Sigmoid colon (tissue), 7 donors: ENCODE measurements at regions of chr17 and their contacts with region 1.

Region 1: DNA sequence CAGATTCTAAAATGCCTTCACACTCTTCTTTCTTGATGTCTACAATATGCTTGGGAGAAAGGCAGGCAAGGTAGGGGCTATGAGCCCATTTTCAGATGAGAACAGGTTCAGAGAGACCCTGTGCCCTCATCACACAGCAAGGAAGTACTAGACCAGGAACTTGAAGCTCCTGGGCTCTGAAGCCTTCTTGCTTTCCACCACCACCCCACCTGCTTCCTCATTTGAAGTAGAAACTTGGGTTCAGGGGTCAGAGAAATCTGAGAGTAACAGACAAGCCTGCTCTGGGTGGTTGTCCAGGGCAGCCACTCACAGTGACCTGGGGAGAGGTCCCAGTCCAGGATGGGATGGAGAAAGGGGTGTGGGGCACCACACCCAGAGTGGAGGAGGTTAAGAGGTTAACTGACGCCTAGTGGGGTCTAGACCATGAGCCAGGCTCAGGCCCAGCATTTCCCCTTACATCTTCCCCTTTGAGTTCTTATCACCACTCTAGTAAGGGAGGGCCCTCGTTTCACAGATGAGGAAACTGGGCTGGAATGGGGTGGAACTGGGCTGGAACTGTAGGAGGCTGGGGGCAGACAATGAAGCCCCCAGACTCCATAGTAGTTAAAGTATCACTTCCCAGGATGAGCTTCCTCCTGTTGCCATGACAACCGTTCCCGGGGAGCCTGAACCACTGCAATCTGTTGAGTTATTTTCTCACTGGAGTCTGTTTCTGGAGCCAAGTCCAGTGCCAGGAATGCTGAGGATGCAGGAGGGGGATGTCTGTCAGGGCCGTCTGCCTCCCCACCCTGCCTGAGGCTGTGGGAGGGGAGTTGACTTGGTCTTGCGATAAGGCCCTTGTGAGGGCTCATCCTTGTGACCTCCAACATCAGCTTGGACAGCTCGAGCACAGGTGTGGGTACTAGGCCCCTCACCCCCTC is 16.2 kb upstream of the PHF12 start:
- DNase-seq: no peak
- H3K4me3 ChIP-seq: no peak overlapping the region
- H3K27ac ChIP-seq: no peak overlapping the region
- H3K4me1 ChIP-seq: no peaks in the 10 kb centered on the region
- H3K27me3 ChIP-seq: no peaks in the 10 kb centered on the region
- CTCF ChIP-seq: no peak
- EP300 ChIP-seq: no peak
- POLR2A ChIP-seq: no peak

Region 2: GRCh38 chr17:28937044-28937729 is 30.3 kb before region 1 on chr17:
- intact Hi-C with region 1: no loop called
- DNase-seq: no peak
- H3K4me3 ChIP-seq: no peak overlapping the region
- H3K27ac ChIP-seq: peak overlapping the region in 3 of 4 donors; percentile 13 to 38 (median 26)
- H3K4me1 ChIP-seq: peaks cover 0 to 89% (median 75%) of the 10 kb centered on the region in 4 donors
- H3K27me3 ChIP-seq: no peaks in the 10 kb centered on the region
- CTCF ChIP-seq: no peak
- EP300 ChIP-seq: no peak
- POLR2A ChIP-seq: no peak

Region 3: GRCh38 chr17:29111816-29112499 is 144.5 kb after region 1 on chr17:
- intact Hi-C with region 1: loop called (anchors 1 kb)
- DNase-seq: peak; percentile 80
- H3K4me3 ChIP-seq: no peak overlapping the region
- H3K27ac ChIP-seq: no peak overlapping the region
- H3K4me1 ChIP-seq: no peaks in the 10 kb centered on the region
- H3K27me3 ChIP-seq: no peaks in the 10 kb centered on the region
- CTCF ChIP-seq: peak; percentile 59 to 91 (median 74)
- EP300 ChIP-seq: no peak
- POLR2A ChIP-seq: no peak

Region 4: DNA sequence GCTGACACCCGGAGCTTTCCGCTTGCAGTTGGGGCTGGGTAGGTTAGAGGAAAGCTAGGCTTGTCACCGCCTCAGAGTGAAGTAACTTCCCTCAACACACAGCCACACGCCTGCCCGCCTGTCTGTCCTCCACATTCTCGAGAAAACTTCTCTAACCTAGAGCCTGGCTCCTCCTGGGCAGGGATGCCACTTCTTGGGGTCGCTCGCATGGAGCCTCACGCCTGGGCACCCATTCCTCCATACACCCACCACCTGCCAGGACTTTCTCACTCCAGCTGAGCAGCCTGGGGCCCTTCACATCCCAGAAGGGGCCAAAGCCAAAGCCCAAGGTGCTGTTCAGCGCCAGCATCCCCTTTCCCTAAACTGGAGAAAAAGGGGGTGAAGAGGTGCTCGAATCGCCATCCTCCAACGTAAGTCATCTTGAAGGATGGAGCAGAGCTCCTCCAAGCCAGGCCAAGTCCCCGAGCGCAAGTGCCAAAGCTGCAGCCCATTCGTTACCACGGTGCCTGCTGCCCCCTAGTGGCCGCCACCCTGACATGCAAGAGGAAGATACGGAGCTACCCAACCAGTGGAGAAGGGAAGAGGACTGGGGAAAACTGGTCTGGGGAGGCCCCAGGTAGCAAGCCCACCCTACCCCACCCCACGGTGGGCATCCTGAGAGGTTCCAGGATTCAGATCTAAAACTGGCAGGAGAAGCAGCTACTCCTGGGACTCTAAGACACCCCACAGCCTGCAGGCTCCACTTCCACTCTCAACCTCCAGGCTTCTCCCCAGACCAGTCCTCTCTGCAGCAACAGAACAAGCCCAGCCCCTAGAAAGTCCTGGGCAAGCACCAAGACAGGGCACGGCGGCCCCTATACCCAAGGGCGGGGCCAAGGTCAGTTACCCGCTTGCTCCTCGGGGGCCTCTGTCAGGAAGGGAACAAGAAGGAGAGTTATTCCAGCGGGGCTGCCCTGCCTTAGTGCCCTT is 149.6 kb after region 1 on chr17:
- intact Hi-C with region 1: loop called (anchors 1 kb)
- DNase-seq: peak; percentile 87
- H3K4me3 ChIP-seq: no peak overlapping the region
- H3K27ac ChIP-seq: no peak overlapping the region
- H3K4me1 ChIP-seq: no peaks in the 10 kb centered on the region
- H3K27me3 ChIP-seq: no peaks in the 10 kb centered on the region
- CTCF ChIP-seq: peak; percentile 66 to 88 (median 72)
- EP300 ChIP-seq: no peak
- POLR2A ChIP-seq: no peak